Panc1 (cell line): ENCODE measurements at regions of chr19 and their contacts with region 1.

Region 1: DNA sequence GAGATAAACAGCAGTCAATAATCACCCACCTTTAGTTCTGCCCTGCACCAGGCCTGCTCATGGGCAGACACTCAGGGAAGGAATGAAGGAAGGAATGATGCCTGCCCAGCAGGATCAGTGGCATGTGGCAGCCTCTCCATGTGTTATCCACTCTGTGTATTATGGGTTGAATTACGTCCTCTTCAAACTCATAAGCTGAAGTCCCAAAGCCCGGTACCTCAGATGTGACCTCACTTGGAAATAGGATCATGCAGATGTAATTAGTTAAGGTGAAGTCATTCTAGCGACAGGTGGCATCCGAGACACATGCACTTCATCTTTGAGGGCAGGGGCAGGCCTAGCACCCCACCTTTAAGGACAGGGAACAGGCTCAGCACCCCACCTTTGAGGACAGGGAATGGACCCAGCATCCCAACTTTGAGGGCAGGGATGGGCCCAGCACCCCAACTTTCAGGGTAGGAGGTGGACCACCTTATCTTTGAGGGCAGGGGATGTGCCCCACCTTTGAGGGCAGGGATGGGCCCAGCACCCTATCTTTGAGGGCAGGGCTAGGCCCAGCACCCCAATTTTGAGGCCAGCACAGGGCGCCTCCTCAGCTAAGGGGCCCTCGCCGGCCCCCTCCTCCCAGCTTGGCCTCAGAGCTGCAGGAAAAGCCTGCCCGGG is 127.6 kb downstream of the URI1 start:
- DNase-seq: no peak
- ATAC-seq: no peak
- H3K4me3 ChIP-seq: no peak overlapping the region
- H3K27ac ChIP-seq: no peak overlapping the region
- H3K4me1 ChIP-seq: no peaks in the 10 kb centered on the region
- H3K27me3 ChIP-seq: no peaks in the 10 kb centered on the region
- CTCF ChIP-seq: no peak

Region 2: GRCh38 chr19:29622138-29623070 is 447.3 kb before region 1 on chr19:
- CTCF ChIA-PET with region 1: no interaction called
- POLR2A ChIA-PET with region 1: no interaction called
- in situ Hi-C with region 1: no loop called
- intact Hi-C with region 1: no loop called
- DNase-seq: no peak
- ATAC-seq: peak; percentile 66; the same call in 1 of the 2 replicates
- H3K4me3 ChIP-seq: no peak overlapping the region
- H3K27ac ChIP-seq: no peak overlapping the region
- H3K4me1 ChIP-seq: no peaks in the 10 kb centered on the region
- H3K27me3 ChIP-seq: no peaks in the 10 kb centered on the region
- CTCF ChIP-seq: no peak

Region 3: GRCh38 chr19:29908963-29909944 is 160.4 kb before region 1 on chr19:
- CTCF ChIA-PET with region 1: no interaction called
- POLR2A ChIA-PET with region 1: interaction called, 10 read pairs
- in situ Hi-C with region 1: no loop called
- intact Hi-C with region 1: no loop called
- DNase-seq: no peak
- ATAC-seq: peak; percentile 56; the same call in 1 of the 2 replicates
- H3K4me3 ChIP-seq: no peak overlapping the region
- H3K27ac ChIP-seq: no peak overlapping the region
- H3K4me1 ChIP-seq: 0 out of 2 replicates have a peak, but pooled peaks cover 6% of the 10 kb centered on the region
- H3K27me3 ChIP-seq: no peaks in the 10 kb centered on the region
- CTCF ChIP-seq: no peak